H1 (cell line): ENCODE measurements at regions of chr6 and their contacts with region 1.

Region 1: DNA sequence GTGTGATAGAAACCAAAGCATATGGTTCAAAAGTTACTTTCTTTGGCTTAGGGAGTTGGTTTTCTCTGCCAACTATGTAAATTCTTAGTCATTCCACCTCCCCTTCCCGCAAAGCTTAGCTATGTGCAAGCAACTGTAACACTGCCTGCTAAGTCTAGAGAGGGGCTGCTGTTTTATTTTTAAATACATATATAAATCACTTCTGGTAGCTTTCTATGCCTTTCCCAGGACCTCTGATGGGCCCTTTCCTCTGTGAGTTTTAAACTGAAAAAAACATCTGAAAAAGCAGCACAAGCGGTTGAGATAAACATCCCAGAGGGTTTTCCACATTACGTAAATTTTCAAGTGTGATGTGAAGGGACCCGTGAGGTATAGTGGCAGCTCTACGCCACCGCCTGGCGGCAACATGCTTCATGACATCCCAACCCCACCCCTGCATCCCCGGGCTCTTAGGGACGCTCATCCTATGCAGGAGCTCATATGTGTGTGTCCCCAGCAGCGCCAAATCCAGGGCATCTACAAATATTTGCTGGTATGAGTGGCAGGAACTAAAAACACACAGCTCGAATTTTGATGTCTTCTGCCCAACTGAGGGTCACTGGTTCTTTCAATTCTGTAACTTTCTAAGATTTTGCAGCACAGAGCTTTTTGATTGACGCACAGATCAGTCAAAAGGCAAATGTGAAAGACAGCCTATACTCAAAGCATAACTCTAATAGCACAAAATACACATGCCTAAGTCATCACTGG is 12.7 kb downstream of the SAYSD1 start:
- DNase-seq: peak in 1 of 2 experiments; percentile 86
- H3K4me3 ChIP-seq: no peak overlapping the region
- H3K27ac ChIP-seq: no peak overlapping the region
- H3K4me1 ChIP-seq: no peaks in the 10 kb centered on the region; a peak in 1 of 7 replicates
- H3K27me3 ChIP-seq: no peaks in the 10 kb centered on the region; a peak in 1 of 7 replicates
- CTCF ChIP-seq: peak; percentile 88 to 92 (median 90)
- EP300 ChIP-seq: no peak
- POLR2A ChIP-seq: no peak
- RAD21 ChIP-seq: peak; percentile 84 to 87

Region 2: DNA sequence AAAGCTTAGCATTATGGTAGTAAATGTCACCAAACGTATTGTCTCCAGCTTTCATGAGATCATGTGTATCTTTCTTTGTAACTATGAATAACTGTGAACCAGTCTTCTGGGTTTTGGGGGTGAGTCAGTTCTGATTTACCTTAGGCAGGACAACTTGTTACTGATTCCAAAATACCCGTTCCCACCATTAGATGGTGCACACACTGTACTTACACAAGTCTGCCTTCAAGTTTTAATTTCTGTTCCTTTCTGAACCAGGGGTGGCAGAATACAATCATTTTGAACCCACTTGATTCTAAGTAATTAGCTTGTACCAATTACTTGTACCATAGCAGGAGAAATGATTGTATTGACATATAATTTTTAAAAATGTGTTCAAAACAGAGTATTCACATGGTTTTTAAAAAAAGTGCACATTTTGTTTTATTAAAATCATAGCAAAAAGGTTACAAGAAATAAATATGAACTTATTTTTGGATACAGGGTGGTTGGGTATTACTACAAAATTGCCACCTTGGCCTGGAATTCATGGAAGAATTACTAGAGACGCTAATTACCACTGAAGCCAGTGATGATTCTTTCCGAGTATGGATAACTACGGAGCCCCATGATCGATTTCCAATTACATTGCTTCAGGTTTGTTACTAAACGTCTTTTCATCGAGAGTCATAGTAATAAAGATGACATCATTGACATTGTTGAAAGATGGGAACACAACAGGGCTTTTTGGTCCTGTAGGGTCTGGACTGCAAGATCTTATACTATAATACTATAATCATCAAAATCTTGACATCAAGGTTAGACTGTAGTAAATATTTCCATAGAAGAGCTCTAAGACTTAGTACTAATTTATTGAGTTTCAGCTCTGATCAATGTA is 128.8 kb before region 1 on chr6:
- CTCF ChIA-PET with region 1: interaction called, 20 read pairs
- POLR2A ChIA-PET with region 1: no interaction called
- DNase-seq: no peak
- H3K4me3 ChIP-seq: no peak overlapping the region
- H3K27ac ChIP-seq: no peak overlapping the region
- H3K4me1 ChIP-seq: peaks cover 0 to 3% (median 2%) of the 10 kb centered on the region in 4 experiments; a peak in 4 of 7 replicates
- H3K27me3 ChIP-seq: no peaks in the 10 kb centered on the region
- CTCF ChIP-seq: peak in 2 of 3 experiments; percentile 68 to 92; a peak in 3 of 4 replicates
- EP300 ChIP-seq: no peak
- POLR2A ChIP-seq: no peak
- RAD21 ChIP-seq: peak; percentile 71 to 77

Region 3: DNA sequence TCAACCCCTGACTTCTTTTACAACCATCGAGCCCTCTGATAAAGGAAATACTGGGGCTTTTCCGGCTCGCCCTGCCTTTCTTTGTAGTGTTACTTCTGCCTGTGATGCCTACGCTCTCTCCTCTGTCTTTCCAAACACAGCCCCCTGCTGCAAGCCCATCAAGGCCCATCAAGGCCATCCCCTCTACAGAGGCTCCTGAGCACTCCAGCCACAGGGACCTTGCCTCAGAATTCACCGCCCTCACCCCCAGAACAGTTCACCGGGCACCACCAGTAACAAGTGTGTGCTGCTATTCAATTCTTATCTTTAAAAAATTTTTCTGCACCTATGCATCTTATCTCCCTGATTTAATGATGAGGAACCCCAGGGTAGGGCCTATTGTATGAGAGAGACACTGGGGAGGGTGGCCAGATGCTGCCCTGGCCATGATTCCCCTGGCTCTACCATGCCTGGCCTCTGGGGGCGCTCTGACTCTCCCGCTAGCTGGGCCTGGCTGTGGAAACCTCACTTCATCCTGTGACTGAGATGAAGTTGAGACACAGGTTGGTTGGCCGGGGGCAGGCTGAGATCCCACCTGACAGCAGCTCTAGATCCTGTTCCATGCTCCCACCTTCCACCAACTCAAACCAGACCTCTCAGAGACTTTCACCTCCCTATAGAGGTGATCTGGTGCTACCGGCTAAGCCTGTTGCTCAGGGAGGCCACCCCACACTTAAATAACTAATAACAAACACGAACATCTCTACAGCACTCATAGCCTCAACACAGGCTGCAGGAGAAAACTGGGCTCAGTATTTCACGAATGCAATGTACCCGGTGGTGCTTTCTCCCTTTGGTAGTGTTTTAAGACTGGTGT is 72.9 kb before region 1 on chr6:
- CTCF ChIA-PET with region 1: interaction called, 22 read pairs
- POLR2A ChIA-PET with region 1: no interaction called
- DNase-seq: peak in 1 of 2 experiments; percentile 93
- H3K4me3 ChIP-seq: no peak overlapping the region
- H3K27ac ChIP-seq: no peak overlapping the region
- H3K4me1 ChIP-seq: peaks cover 0 to 4% (median 0%) of the 10 kb centered on the region in 4 experiments; a peak in 1 of 7 replicates
- H3K27me3 ChIP-seq: no peaks in the 10 kb centered on the region; a peak in 1 of 7 replicates
- CTCF ChIP-seq: peak; percentile 81 to 97 (median 97)
- EP300 ChIP-seq: no peak
- POLR2A ChIP-seq: no peak
- RAD21 ChIP-seq: peak; percentile 70 to 79

Region 4: DNA sequence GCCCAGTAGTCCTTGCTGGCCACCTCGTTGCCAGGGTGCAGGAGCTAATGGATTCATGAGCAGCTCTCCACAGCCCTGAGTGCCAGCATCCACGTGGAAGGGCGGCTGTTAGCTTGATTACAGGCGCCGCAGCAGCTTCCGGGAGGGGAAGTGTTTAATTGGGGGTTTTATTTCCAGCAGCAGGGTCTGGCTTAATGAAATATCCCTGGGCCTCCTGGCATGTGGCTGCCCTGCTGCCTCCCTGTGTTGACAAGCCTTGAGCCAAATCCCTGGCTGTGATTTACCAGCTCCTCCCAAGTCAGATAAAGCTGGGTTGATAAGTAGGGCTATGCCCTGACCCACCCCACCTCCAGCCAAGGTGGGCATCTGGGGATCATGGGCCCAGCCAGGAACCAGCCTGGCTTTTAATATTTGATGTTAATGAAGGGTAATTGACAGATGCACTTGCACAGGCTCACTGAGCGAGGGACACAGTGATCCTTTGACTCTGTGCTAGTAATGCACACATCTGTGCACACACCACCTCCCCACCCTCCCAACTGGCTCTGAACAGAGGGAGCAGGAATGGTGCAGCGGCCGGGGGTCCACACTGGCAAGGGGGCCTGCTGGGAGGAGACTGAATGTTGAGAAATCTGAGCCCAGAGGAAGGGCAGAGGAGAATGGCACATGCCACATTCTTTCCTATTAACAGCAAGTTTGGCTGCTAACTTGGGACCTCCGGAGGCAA is 40.1 kb before region 1 on chr6:
- CTCF ChIA-PET with region 1: interaction called, 17 read pairs
- POLR2A ChIA-PET with region 1: no interaction called
- DNase-seq: no peak
- H3K4me3 ChIP-seq: no peak overlapping the region
- H3K27ac ChIP-seq: no peak overlapping the region
- H3K4me1 ChIP-seq: no peaks in the 10 kb centered on the region
- H3K27me3 ChIP-seq: 0 out of 7 replicates have a peak, but pooled peaks cover 0 to under 1% (median 0%) of the 10 kb centered on the region in 4 experiments
- CTCF ChIP-seq: no peak
- EP300 ChIP-seq: no peak
- POLR2A ChIP-seq: no peak
- RAD21 ChIP-seq: no peak

Region 5: GRCh38 chr6:39128106-39128505 is 25.9 kb after region 1 on chr6:
- CTCF ChIA-PET with region 1: interaction called, 10 read pairs
- POLR2A ChIA-PET with region 1: no interaction called
- DNase-seq: no peak
- H3K4me3 ChIP-seq: no peak overlapping the region
- H3K27ac ChIP-seq: no peak overlapping the region
- H3K4me1 ChIP-seq: peaks cover 0 to 5% (median 0%) of the 10 kb centered on the region in 4 experiments; a peak in 1 of 7 replicates
- H3K27me3 ChIP-seq: peaks cover 0 to 1% (median 0%) of the 10 kb centered on the region in 4 experiments; a peak in 2 of 7 replicates
- CTCF ChIP-seq: no peak
- EP300 ChIP-seq: no peak
- POLR2A ChIP-seq: no peak
- RAD21 ChIP-seq: no peak

Region 6: GRCh38 chr6:39309942-39310531 is 207.8 kb after region 1 on chr6:
- CTCF ChIA-PET with region 1: interaction called, 25 read pairs
- POLR2A ChIA-PET with region 1: no interaction called
- DNase-seq: peak; percentile 53 to 92
- H3K4me3 ChIP-seq: no peak overlapping the region
- H3K27ac ChIP-seq: no peak overlapping the region
- H3K4me1 ChIP-seq: peaks cover 0 to 5% (median 3%) of the 10 kb centered on the region in 4 experiments; a peak in 4 of 7 replicates
- H3K27me3 ChIP-seq: peaks cover 21 to 43% (median 38%) of the 10 kb centered on the region in 4 experiments
- CTCF ChIP-seq: peak in 2 of 3 experiments; percentile 97 to 99; a peak in 3 of 4 replicates
- EP300 ChIP-seq: no peak
- POLR2A ChIP-seq: no peak
- RAD21 ChIP-seq: peak; percentile 99 to 100